Ovary (tissue), 10 donors: ENCODE measurements at regions of chr17 and their contacts with region 1.

Region 1: GRCh38 chr17:38729886-38730525 is at the start of gene CISD3:
- DNase-seq: peak; percentile 83 to 90 (median 88)
- H3K4me3 ChIP-seq: peak within 1 kb of the TSS; percentile 42
- H3K27ac ChIP-seq: peak within 1 kb of the TSS; percentile 70 to 74
- H3K4me1 ChIP-seq: peaks cover 6% of the 10 kb centered on the region
- H3K27me3 ChIP-seq: no peaks in the 10 kb centered on the region
- CTCF ChIP-seq: peak; percentile 47 to 98 (median 97)
- EP300 ChIP-seq: no peak
- POLR2A ChIP-seq: peak; percentile 19
- total RNA-seq, gene CISD3: 6.2 to 31.1 (median 24.4) TPM

Region 2: GRCh38 chr17:38693700-38694329 is 36.2 kb before region 1 on chr17:
- intact Hi-C with region 1: loop called in 1 of 4 experiments (anchors 5 kb)
- DNase-seq: peak; percentile 96 to 99 (median 98)
- H3K4me3 ChIP-seq: no peak overlapping the region
- H3K27ac ChIP-seq: peak overlapping the region; percentile 36 to 83
- H3K4me1 ChIP-seq: peaks cover 6% of the 10 kb centered on the region
- H3K27me3 ChIP-seq: no peaks in the 10 kb centered on the region
- CTCF ChIP-seq: peak in 2 of 3 donors; percentile 5 to 10
- EP300 ChIP-seq: no peak
- POLR2A ChIP-seq: peak; percentile 36